Activated CD8-positive, alpha-beta memory T cell treated with anti-CD3 and anti-CD28 coated beads, Interleukin-2, amount 10 ng/mL, durations not matched to agents 7 days and 5 days (primary cell): ENCODE measurements at regions of chr7 and their contacts with region 1.

Region 1: GRCh38 chr7:151123822-151124464 is 37.7 kb downstream of the AGAP3 start:
- DNase-seq: peak; percentile 86
- ATAC-seq: peak; percentile 95
- H3K4me3 Mint-ChIP-seq: no peak overlapping the region
- H3K27ac Mint-ChIP-seq: no peak overlapping the region
- H3K4me1 Mint-ChIP-seq: no peaks in the 10 kb centered on the region
- H3K27me3 Mint-ChIP-seq: peaks cover 3% of the 10 kb centered on the region

Region 2: GRCh38 chr7:151110941-151111645 is 12.8 kb before region 1 on chr7:
- CTCF ChIA-PET with region 1: interaction called, 20 read pairs
- DNase-seq: peak; percentile 84
- ATAC-seq: peak; percentile 85
- H3K4me3 Mint-ChIP-seq: no peak overlapping the region
- H3K27ac Mint-ChIP-seq: no peak overlapping the region
- H3K4me1 Mint-ChIP-seq: peaks cover 2% of the 10 kb centered on the region
- H3K27me3 Mint-ChIP-seq: peaks cover 16% of the 10 kb centered on the region

Region 3: GRCh38 chr7:151146761-151147160 is 22.8 kb after region 1 on chr7:
- CTCF ChIA-PET with region 1: interaction called, 10 read pairs
- DNase-seq: no peak
- ATAC-seq: no peak
- H3K4me3 Mint-ChIP-seq: no peak overlapping the region
- H3K27ac Mint-ChIP-seq: no peak overlapping the region
- H3K4me1 Mint-ChIP-seq: no peaks in the 10 kb centered on the region
- H3K27me3 Mint-ChIP-seq: peaks cover 10% of the 10 kb centered on the region

Region 4: DNA sequence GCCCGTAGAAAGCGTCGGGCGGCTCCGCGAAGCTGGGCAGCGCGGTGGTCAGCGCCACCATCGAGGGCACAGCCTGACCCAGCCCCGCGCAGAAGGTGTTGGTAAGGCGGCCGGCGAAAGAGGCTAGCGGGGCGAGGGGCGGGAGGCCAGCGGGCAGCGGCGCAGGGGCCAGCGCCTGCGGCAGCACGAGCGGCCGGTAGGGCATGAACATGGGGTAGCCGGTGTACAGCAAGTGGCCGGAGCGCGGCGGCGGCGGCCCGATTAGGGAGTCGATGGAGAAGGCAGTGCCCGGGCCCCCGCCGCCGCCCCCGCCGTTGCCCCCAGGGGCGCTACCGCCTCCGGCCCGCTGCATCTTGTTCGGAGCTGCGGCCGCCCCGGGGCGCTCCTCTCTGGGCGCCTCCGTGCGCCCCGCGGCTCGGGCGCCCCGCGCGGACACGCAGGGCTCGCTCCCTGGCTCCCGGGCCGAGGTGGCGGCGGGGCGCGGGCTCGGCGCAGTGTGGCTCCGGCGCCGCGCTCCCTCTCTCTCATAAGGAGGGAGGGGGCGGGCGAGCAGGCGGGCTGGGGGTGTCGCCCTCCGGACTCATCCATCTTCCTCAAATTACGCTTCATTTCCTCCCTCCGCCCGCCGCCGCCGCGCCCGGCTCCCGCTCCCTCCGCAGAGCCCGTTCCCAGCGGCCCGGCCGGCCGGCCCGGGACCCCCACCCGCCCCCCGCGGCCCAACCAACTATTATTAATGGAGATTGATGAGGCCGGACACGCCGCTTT is 43.4 kb after region 1 on chr7 and contains the start of gene GBX1:
- CTCF ChIA-PET with region 1: interaction called, 24 read pairs
- DNase-seq: no peak
- ATAC-seq: peak; percentile 50
- H3K4me3 Mint-ChIP-seq: peak within 1 kb of the TSS; percentile 38
- H3K27ac Mint-ChIP-seq: no peak within 1 kb of the TSS
- H3K4me1 Mint-ChIP-seq: peaks cover 5% of the 10 kb centered on the region
- H3K27me3 Mint-ChIP-seq: peaks cover 42% of the 10 kb centered on the region
- total RNA-seq, gene GBX1: not detected

Region 5: DNA sequence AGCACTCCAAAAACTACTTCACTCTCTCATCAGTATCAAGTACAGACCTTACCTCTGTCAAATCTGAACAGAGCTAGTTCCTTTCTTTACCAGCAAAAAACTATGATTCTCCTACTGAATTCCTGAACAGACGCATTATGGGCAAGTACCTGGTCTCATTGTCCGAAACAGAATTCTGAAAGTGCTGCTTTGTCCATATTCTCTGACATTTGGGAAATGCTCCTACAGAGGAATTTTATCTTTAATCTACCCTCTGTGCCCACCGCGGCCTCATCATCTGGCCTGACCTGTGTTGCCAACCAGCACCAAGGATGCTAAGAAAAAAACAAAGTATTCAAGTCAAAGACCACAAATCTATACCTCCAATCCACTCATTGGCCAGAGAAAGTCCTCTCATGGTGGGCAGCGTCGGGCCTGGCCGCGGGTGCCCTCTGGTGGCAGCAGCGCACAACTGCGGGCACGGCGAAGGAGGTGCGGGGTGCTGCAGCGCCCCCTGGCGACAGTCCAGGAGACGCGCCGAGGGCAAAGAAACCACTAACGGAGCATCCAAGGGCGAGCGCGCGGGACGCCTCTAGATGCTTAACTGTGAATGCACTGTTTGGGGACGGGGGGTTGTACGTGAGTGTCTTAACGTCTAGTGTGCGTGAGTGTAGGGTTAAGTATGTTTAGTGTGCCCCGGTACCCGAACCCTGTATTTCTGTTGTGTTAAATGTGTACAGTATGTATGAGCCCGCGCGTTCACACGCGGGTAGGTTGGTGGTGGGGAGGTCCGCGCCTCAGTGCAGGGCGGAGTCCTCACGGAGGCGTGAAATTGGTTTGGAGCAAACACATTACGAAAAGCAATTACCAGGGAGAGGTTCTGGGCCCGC is 48.6 kb after region 1 on chr7:
- CTCF ChIA-PET with region 1: interaction called, 24 read pairs
- DNase-seq: peak; percentile 84
- ATAC-seq: peak; percentile 70
- H3K4me3 Mint-ChIP-seq: no peak overlapping the region
- H3K27ac Mint-ChIP-seq: no peak overlapping the region
- H3K4me1 Mint-ChIP-seq: peaks cover 12% of the 10 kb centered on the region
- H3K27me3 Mint-ChIP-seq: peaks cover 52% of the 10 kb centered on the region

Region 6: DNA sequence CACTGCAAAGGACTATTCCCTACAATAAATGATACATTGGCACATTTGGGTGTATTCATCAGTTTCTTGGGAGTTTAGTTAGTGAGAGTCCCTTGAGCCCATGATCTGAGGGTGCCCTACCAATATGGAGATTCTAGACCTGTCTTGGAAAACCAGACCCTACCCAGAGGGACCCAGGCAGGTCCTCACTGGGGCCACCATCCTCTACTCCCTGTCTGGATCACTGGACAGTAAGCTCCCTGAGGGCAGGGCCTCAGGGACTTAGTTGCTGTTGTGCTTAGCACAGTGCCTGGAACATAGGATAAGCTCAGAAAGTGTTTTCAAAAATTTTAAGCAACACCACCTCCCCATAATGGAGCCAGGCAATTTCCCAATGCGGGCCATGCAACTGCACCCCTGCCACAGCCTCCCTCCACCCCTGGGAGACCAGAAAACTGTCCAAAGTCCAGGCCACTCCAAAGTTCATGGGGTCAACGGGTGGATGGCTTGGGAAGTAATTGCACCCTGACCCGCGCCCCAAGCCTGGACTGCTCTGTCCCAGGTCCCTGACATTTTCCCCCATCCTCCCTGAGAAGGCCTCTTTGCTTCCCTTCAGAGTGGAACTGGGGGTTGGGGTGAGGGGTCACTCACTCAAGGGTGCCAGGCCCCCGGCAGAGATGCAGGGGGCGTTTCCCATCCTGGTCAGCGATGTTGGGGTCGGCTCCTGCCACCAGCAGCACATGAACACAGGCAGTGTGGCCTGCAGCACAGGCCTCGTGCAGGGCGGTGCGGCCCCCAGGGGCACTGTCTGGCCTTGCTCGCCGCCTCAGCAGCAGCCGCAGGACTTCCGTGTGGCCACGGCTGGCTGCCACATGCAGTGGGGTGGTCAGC is 62.1 kb after region 1 on chr7:
- CTCF ChIA-PET with region 1: no interaction called
- DNase-seq: no peak
- ATAC-seq: no peak
- H3K4me3 Mint-ChIP-seq: no peak overlapping the region
- H3K27ac Mint-ChIP-seq: no peak overlapping the region
- H3K4me1 Mint-ChIP-seq: no peaks in the 10 kb centered on the region
- H3K27me3 Mint-ChIP-seq: peaks cover 13% of the 10 kb centered on the region

Region 7: GRCh38 chr7:151304856-151305255 is 180.9 kb after region 1 on chr7:
- CTCF ChIA-PET with region 1: interaction called, 28 read pairs
- DNase-seq: no peak
- ATAC-seq: no peak
- H3K4me3 Mint-ChIP-seq: peak overlapping the region; percentile 23
- H3K27ac Mint-ChIP-seq: no peak overlapping the region
- H3K4me1 Mint-ChIP-seq: peaks cover 17% of the 10 kb centered on the region
- H3K27me3 Mint-ChIP-seq: peaks cover 41% of the 10 kb centered on the region